HEK293T (cell line): ENCODE measurements at regions of chr3 and their contacts with region 1.

Region 1: GRCh38 chr3:19357947-19358346 is 209.6 kb downstream of the KCNH8 start:
- DNase-seq: no peak

Region 2: GRCh38 chr3:20350449-20350848 is 992.5 kb after region 1 on chr3:
- CTCF ChIA-PET with region 1: interaction called, 10 read pairs
- POLR2A ChIA-PET with region 1: no interaction called
- DNase-seq: no peak